ENCODE measurements at regions of chr19 and their contacts with region 1.

Region 1: DNA sequence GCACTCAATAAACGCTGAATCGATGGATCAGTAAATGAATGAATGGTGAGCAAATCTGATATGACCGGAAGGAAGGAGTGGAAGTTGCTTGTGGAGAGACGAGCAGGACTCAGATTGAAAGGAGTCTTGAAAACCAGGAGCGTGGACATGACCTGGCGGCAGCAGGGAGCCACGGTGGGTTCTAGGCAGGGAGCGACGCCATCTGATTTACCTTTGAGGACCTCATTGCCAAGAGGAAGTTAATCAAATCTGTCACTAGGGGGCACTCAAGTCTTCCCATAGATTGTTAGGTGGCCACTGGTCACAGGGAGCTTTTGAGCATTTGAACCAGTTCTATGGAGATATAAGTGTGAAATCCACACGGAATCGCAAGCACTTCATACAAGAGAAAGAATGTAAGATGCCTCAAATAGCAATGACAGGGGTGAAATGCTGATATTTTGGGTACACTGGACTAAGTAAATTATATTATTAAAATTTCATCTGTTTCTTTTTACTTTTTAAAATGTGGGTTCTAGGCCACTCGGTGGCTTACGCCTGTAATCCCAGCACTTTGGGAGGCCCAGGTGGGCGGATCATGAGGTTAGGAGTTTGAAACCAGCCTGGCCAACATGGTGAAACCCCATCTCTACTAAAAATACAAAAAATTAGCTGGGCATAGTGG is 9.2 kb upstream of the FBN3 start:
- DNase-seq: peak; percentile 77 to 88 (median 78)
- ATAC-seq: peak; percentile 75
- H3K4me3 ChIP-seq: no peak overlapping the region
- H3K27ac ChIP-seq: no peak overlapping the region
- H3K4me1 ChIP-seq: peaks cover 4 to 13% of the 10 kb centered on the region in 2 experiments; a peak in 3 of 5 replicates
- H3K27me3 ChIP-seq: no peaks in the 10 kb centered on the region
- CTCF ChIP-seq: peak; percentile 75 to 90 (median 83)
- EP300 ChIP-seq: peak; percentile 11; the same call in 1 of the 2 replicates
- POLR2A ChIP-seq: no peak
- RAD21 ChIP-seq: peak; percentile 91 to 96

Region 2: DNA sequence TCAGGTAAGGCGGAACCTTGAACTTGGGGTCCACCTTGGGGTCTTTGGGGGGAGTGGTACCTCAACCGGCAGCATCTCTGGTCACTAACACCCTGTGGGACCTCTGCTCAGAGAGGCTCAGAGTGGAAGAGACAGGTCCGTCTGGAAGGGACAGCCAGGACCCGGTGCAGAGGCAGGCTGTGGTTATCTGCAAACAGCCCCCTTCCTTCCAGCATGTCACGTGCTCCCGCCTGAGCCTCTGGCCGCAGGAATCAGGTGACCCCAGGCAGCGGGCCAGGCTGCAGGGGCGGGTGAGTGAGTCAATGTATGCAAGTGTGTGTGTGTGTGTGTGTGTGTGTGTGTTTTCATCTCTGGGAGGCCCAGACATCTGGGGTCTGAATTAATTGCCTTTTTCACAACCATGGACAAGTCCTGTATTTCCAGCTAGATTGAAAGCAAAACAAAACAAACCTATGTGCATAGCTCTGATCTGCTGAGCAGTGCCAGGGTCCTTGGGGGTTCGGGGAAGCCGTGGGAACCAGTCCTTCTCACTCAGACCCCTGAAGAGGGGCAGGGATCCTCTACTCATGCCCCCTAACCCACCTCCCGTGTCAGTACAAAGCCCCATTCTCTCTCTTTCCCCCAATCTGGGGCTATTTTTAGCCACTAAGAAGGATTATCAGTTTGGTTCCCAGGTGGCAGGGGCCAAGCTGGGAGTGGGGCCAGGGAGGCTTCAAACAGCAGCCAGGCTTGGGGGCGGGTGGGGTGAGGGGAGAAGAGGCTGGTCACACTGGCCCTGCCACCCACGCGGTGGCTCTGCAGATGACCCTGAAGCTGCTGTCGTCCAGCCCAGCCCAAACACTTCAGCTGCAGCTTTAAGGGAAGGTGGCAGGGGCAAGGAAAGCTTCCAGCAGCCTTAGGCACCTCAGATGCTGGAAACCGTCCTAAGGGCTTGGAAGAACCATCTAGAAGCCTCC is 82.0 kb after region 1 on chr19:
- CTCF ChIA-PET with region 1: no interaction called
- POLR2A ChIA-PET with region 1: interaction called, 3 read pairs
- in situ Hi-C with region 1: no loop called
- intact Hi-C with region 1: loop called (anchors 5 kb)
- DNase-seq: peak; percentile 93 to 96 (median 95)
- ATAC-seq: peak; percentile 99
- H3K4me3 ChIP-seq: no peak overlapping the region
- H3K27ac ChIP-seq: peak overlapping the region; percentile 67
- H3K4me1 ChIP-seq: peaks cover 15 to 18% of the 10 kb centered on the region in 2 experiments
- H3K27me3 ChIP-seq: no peaks in the 10 kb centered on the region
- CTCF ChIP-seq: no peak
- EP300 ChIP-seq: peak; percentile 78
- POLR2A ChIP-seq: no peak
- RAD21 ChIP-seq: 0 out of 4 replicates have a peak, but pooled peaks of 1 of the 2 experiments have one; percentile 16

Region 3: DNA sequence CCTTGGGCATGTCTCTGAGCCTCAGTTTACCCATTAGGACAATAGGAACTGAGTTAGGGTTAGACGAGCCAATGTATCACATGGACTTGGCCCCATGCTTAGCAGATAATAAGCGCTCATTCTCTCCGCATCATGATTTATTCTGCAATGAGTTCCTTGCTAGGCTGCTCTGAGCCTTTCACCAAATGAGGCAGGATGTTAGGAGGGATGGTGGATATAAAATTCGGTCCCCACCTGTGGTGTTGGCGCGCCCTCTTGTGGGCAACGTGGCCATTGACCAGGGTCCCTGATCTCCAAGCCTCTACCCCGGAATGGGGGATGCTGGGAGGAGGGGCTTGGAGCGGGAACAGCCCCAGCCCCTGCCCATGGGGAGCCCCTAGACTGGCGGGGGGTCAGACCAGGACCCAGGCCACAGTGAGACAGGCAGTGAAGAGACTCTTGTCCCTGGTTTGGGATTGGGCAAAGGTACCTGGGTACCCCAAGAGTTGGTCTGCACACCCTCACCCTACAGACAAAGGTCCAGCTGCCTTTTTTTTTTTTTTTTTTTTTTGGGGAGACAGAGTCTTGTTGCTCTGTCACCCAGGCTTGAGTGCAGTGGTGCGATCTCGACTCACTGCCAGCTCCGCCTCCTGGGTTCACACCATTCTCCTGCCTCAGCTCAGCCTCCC is 94.5 kb after region 1 on chr19:
- CTCF ChIA-PET with region 1: interaction called, 63 read pairs
- POLR2A ChIA-PET with region 1: interaction called, 7 read pairs
- in situ Hi-C with region 1: loop called (anchors 5 kb)
- intact Hi-C with region 1: loop called (anchors 1 kb)
- DNase-seq: peak; percentile 88 to 90 (median 90)
- ATAC-seq: peak; percentile 90
- H3K4me3 ChIP-seq: no peak overlapping the region
- H3K27ac ChIP-seq: no peak overlapping the region
- H3K4me1 ChIP-seq: peaks cover 13 to 42% of the 10 kb centered on the region in 2 experiments; a peak in 4 of 5 replicates
- H3K27me3 ChIP-seq: no peaks in the 10 kb centered on the region
- CTCF ChIP-seq: peak; percentile 95 to 97 (median 97)
- EP300 ChIP-seq: no peak
- POLR2A ChIP-seq: no peak
- RAD21 ChIP-seq: peak; percentile 98 to 99